K562 (cell line): ENCODE measurements at regions of chr17 and their contacts with region 1.

Region 1: DNA sequence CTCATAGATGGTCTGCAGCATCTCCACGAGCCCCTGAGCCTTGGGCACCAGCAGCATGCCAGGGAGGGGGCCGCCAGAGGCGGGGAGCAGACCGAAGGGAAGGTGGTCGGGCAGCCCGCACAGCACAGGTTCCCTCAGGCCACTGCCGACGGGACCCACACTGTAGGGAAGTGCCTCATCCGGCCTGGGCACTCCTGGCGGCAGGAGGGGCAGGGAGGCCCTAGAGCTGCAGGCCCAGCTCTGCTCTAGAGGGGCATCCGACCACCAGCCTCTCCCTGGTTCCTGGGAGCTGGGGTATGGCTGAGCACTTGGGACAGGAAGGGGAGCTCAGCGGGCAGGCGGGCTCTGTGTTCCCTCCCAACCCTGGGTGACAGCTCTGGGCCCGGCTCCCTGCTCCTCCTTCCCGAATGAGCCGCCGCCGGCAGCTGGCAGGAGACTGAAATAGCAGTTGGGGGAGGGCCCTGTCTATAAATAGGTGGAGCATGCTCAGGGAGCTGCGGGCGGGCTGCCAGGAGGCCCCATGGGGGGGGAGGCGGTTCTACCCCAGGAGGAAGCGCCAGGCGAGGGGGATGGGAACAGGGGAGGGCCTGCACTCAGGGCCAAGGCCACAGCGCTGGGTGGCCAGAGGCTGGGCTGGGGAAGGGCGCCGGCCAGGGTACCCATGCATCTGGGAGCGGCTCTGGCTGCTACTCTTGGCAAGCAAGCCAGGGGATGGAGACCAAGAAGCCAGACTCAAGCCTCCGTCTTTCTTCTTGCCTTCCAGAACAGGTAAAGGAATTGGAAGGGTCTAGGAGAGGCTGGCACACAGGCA is 12.4 kb downstream of the HDAC5 start:
- DNase-seq: peak; percentile 95 to 96 (median 95)
- ATAC-seq: peak; percentile 84
- H3K4me3 ChIP-seq: peak overlapping the region; percentile 26; the same call in 1 of the 2 replicates
- H3K27ac ChIP-seq: peak overlapping the region; percentile 46
- H3K4me1 ChIP-seq: peaks cover 38 to 65% of the 10 kb centered on the region in 2 experiments
- H3K27me3 ChIP-seq: no peaks in the 10 kb centered on the region
- CTCF ChIP-seq: peak in 1 of 3 experiments; percentile 19; a peak in 1 of 6 replicates
- EP300 ChIP-seq: peak; percentile 42; the same call in 1 of the 2 replicates
- POLR2A ChIP-seq: no peak
- RAD21 ChIP-seq: peak in 1 of 2 experiments; percentile 18; a peak in 1 of 4 replicates

Region 2: GRCh38 chr17:44095642-44096496 is 15.2 kb before region 1 on chr17:
- CTCF ChIA-PET with region 1: no interaction called
- POLR2A ChIA-PET with region 1: interaction called, 19 read pairs
- in situ Hi-C with region 1: no loop called
- intact Hi-C with region 1: no loop called
- DNase-seq: peak; percentile 82 to 93 (median 85)
- ATAC-seq: peak; percentile 83
- H3K4me3 ChIP-seq: peak overlapping the region; percentile 31
- H3K27ac ChIP-seq: peak overlapping the region; percentile 85
- H3K4me1 ChIP-seq: peaks cover 33 to 64% of the 10 kb centered on the region in 2 experiments
- H3K27me3 ChIP-seq: no peaks in the 10 kb centered on the region
- CTCF ChIP-seq: peak; percentile 15 to 34 (median 20); a peak in 2 of 6 replicates
- EP300 ChIP-seq: 0 out of 2 replicates have a peak, but pooled peaks have one; percentile 52
- POLR2A ChIP-seq: peak; percentile 82
- RAD21 ChIP-seq: peak; percentile 13 to 33; a peak in 1 of 4 replicates

Region 3: DNA sequence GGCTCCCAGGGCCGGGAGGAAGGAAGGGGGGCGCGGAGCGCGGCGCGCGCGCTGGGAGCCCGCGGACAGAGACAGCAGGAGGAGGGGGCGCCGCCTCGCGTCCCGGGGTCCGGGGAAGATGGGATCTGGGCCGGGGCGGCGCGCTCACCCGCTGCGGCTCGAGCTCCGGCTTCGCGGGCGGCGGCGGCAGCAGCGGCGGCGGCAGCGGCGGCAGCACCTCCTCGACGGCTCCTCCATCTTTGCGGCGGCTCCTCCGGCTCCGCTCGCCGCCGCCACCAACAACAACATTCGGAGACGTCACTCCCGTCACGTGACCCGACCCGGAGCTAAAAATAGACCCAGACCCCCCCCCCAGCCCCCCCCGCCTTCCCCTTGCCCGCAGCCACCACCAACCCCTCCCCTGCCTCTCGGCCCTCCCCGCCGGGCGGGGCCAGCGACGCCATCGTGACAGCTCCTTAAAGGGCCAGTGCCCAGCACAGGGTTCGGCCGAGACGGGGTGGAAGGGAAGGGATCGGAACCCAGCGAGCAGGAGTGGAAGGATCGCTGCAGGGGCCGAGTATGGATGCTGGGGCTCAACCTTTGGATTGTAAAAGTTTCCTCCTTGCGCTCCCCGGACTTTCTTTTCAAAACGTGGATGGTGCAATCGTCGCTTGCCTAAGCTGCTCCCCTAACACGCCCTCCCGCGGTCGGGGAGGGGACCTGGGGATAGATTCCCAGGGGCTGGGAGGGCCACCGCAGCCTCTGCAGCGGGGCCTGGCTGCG is 12.5 kb after region 1 on chr17 and contains the start of gene HDAC5:
- CTCF ChIA-PET with region 1: no interaction called
- POLR2A ChIA-PET with region 1: interaction called, 49 read pairs
- in situ Hi-C with region 1: no loop called
- intact Hi-C with region 1: no loop called
- DNase-seq: peak; percentile 95 to 96 (median 96)
- ATAC-seq: peak; percentile 95
- H3K4me3 ChIP-seq: peak within 1 kb of the TSS; percentile 93
- H3K27ac ChIP-seq: peak within 1 kb of the TSS; percentile 96
- H3K4me1 ChIP-seq: peaks cover 10 to 32% of the 10 kb centered on the region in 2 experiments; a peak in 4 of 5 replicates
- H3K27me3 ChIP-seq: no peaks in the 10 kb centered on the region; a peak in 1 of 5 replicates
- CTCF ChIP-seq: peak; percentile 78 to 85 (median 80)
- EP300 ChIP-seq: peak; percentile 43
- POLR2A ChIP-seq: peak; percentile 71
- RAD21 ChIP-seq: peak; percentile 51 to 58
- polyA plus RNA-seq, gene HDAC5: 0.45 to 0.73 TPM